Activated CD4-positive, alpha-beta T cell treated with anti-CD3 and anti-CD28 coated beads, Interleukin-2, amount 10 ng/mL, durations not matched to agents 7 days and 5 days (primary cell): ENCODE measurements at regions of chr19 and their contacts with region 1.

Region 1: DNA sequence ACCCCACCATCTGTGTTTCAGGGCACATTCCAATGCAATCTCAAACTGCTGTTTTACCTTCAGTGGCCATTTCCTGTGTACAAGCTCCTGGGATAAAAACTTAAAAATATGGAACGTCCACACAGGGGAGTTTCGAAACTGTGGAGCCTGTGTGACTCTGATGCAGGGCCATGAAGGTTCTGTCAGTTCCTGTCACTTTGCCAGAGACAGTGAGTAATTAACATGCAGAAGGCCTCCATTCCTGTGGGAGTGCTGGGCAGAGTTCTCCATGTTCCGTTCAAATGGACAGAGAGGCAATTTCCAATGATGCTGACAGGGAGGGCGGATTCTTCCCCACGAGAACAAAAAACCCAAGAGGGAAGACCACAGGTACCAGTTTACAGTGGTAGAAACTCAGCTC is 24.4 kb downstream of the WDR88 start:
- DNase-seq: no peak
- H3K4me3 Mint-ChIP-seq: no peak overlapping the region
- H3K27ac Mint-ChIP-seq: peak overlapping the region; percentile 25
- H3K4me1 Mint-ChIP-seq: peaks cover 34% of the 10 kb centered on the region
- H3K27me3 Mint-ChIP-seq: no peaks in the 10 kb centered on the region

Region 2: GRCh38 chr19:33176670-33177416 is 20.5 kb after region 1 on chr19:
- CTCF ChIA-PET with region 1: interaction called, 58 read pairs
- POLR2A ChIA-PET with region 1: interaction called, 12 read pairs
- DNase-seq: peak; percentile 95
- H3K4me3 Mint-ChIP-seq: peak overlapping the region; percentile 91
- H3K27ac Mint-ChIP-seq: peak overlapping the region; percentile 95
- H3K4me1 Mint-ChIP-seq: peaks cover 36% of the 10 kb centered on the region
- H3K27me3 Mint-ChIP-seq: peaks cover 2% of the 10 kb centered on the region